Activated CD4-positive, alpha-beta T cell treated with anti-CD3 and anti-CD28 coated beads, Interleukin-2, amount 10 ng/mL, durations not matched to agents 7 days and 5 days (primary cell): ENCODE measurements at regions of chr1 and their contacts with region 1.

Region 1: GRCh38 chr1:230288641-230289349 is 137.3 kb downstream of the PGBD5 start:
- DNase-seq: no peak
- H3K4me3 Mint-ChIP-seq: no peak overlapping the region
- H3K27ac Mint-ChIP-seq: no peak overlapping the region
- H3K4me1 Mint-ChIP-seq: peaks cover 1% of the 10 kb centered on the region
- H3K27me3 Mint-ChIP-seq: peaks cover 20% of the 10 kb centered on the region

Region 2: DNA sequence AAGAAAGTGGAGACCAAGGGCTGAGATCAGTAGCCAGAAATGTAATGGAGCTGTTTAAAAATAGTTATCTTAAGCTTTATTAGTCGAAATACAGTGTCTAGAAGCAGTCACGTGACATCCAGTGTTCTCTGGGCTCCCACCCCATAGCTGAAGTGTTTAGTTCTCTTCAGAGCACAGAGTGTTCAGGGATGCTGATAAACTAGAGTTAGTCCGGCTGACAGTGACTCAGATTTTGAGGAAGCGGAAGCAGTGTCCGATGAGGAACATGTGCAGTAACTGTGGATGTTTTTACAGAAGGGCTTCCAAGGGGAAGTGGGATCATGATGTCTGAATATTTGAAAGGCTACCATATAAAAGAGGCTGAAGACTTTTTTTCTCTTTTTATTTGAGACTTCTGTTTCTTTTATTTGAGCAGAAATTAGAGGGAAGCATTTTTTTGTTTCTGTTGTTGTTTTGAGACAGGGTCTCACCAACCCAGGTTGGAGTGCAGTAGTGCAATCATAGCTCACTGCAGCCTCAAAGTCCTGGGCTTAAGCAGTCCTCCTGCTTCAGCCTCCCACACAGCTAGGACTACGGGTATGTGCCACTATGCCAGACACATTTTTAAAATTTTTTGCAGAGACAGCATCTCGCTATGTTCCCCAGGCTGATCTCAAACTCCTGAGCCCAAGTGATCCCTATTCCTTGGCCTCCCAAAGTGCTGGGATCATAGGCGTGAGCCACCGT is 97.6 kb before region 1 on chr1:
- CTCF ChIA-PET with region 1: no interaction called
- POLR2A ChIA-PET with region 1: no interaction called
- DNase-seq: no peak
- H3K4me3 Mint-ChIP-seq: no peak overlapping the region
- H3K27ac Mint-ChIP-seq: no peak overlapping the region
- H3K4me1 Mint-ChIP-seq: peaks cover 49% of the 10 kb centered on the region
- H3K27me3 Mint-ChIP-seq: no peaks in the 10 kb centered on the region

Region 3: DNA sequence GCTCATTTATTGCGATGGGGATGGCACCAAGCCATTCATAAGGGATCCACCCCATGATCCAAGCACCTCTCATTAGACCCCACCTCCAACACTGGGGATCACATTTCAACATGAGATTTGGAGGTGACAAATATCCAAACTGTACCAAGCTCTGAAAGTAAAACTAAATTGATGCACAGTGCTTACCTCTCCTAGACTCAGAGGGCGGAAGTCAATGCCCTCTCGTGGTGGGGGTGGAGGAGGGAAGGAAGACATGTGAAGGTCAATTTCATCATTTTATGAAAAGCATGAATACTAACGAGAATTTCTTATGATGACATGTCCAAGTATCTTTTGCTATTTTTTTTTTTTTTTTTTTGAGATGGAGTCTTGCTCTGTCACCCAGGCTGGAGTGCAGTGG is 17.4 kb after region 1 on chr1:
- CTCF ChIA-PET with region 1: interaction called, 10 read pairs
- POLR2A ChIA-PET with region 1: no interaction called
- DNase-seq: peak; percentile 34
- H3K4me3 Mint-ChIP-seq: no peak overlapping the region
- H3K27ac Mint-ChIP-seq: no peak overlapping the region
- H3K4me1 Mint-ChIP-seq: peaks cover 13% of the 10 kb centered on the region
- H3K27me3 Mint-ChIP-seq: no peaks in the 10 kb centered on the region